Esophagus muscularis mucosa (tissue), 4 donors: ENCODE measurements at regions of chr12 and their contacts with region 1.

Region 1: DNA sequence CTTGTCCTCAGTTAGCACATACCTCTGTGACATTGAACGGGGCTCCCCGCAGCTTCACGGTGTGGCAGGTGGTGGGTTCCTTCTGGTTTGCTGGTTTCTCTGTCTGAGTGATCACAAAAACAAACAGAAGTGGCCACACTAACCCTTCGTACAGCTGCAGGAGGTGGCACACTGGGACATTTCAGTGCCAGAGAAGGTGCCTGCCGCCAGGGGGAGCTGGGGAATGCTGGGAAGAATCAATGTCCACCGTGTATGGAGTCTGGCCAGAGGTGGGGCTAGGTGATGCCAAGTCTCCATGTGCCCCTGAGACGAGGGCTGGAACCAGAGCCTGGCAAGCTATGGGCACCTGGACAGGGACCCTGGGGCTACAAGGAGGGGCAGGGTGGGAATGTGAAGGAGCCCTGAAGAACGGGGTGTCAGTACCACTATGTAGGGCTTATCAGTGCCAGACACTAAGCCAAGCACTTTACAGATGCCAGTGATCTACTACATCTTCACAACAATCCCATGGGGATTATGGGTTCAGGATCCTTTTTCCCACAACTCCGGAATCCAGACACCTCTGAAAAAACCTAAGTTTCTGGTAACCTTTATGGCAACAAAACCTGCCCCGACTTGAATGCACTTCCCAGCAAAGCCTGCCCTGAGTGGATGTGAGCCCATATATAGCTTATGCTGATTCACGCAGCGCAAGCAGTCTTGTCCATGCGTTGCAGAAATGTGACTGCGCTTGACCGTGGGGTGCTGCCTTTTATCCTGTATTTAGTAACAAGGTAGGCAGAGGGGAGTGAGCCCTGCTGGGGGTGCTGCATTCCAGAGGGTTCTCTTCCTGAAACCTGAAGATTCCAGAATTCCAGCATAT is 10.8 kb downstream of the RBM19 start:
- DNase-seq: no peak
- H3K4me3 ChIP-seq: no peak overlapping the region
- H3K27ac ChIP-seq: no peak overlapping the region
- H3K4me1 ChIP-seq: no peaks in the 10 kb centered on the region
- H3K27me3 ChIP-seq: no peaks in the 10 kb centered on the region
- CTCF ChIP-seq: peak in 1 of 3 experiments; percentile 14
- EP300 ChIP-seq: no peak
- POLR2A ChIP-seq: no peak

Region 2: GRCh38 chr12:113933201-113933786 is 22.0 kb before region 1 on chr12:
- intact Hi-C with region 1: loop called (anchors 1 kb)
- DNase-seq: no peak
- H3K4me3 ChIP-seq: no peak overlapping the region
- H3K27ac ChIP-seq: peak overlapping the region in 3 of 4 donors; percentile 36 to 49 (median 40)
- H3K4me1 ChIP-seq: peaks cover 0 to 21% (median 4%) of the 10 kb centered on the region in 4 donors
- H3K27me3 ChIP-seq: no peaks in the 10 kb centered on the region
- CTCF ChIP-seq: no peak
- EP300 ChIP-seq: no peak
- POLR2A ChIP-seq: no peak